ENCODE measurements at regions of chr3 and their contacts with region 1.

Region 1: GRCh38 chr3:24683633-24684384 is 189.2 kb upstream of the THRB start:
- DNase-seq: peak; percentile 41
- H3K4me3 ChIP-seq: no peak overlapping the region
- H3K27ac ChIP-seq: no peak overlapping the region
- H3K27me3 ChIP-seq: no peaks in the 10 kb centered on the region
- CTCF ChIP-seq: peak; percentile 71

Region 2: DNA sequence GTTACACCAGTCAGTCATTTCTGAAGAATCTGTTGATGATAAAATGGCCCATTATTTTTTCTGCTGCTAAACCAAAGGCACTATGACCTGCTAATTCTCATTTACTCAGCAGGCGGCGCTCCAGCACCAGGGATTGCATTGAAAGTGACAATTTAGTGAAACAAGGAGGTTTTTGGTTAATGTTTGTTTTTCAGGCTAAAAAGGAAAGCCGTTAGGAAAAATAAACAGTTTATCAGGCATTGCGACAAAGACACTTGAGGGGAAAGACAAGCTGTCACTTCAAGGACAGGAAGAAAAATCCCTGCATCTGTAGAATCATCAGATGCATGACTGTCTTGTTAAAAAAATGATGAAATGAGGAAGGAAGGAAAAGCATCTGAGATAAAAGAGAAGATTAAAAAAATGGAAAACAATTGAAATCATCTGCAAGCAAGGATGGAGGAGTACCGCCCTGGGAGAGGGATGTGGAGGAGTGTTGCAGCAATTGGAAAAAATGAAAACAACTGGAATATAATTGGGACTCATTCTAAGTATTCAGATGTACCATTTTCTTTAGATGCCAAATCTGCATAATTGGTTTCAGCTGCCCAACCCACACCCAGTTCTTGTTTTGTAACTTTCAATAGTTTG is 684.7 kb before region 1 on chr3:
- CTCF ChIA-PET with region 1: interaction called, 49 read pairs
- POLR2A ChIA-PET with region 1: no interaction called
- DNase-seq: peak; percentile 18
- H3K4me3 ChIP-seq: no peak overlapping the region
- H3K27ac ChIP-seq: no peak overlapping the region
- H3K27me3 ChIP-seq: no peaks in the 10 kb centered on the region
- CTCF ChIP-seq: peak; percentile 97

Region 3: GRCh38 chr3:24264748-24265158 is 419.1 kb before region 1 on chr3:
- CTCF ChIA-PET with region 1: interaction called, 28 read pairs
- POLR2A ChIA-PET with region 1: no interaction called
- DNase-seq: no peak
- H3K4me3 ChIP-seq: no peak overlapping the region
- H3K27ac ChIP-seq: no peak overlapping the region
- H3K27me3 ChIP-seq: peaks cover 10% of the 10 kb centered on the region
- CTCF ChIP-seq: peak; percentile 83

Measured in AG04450 (cell line).